ENCODE measurements at regions of chr5 and their contacts with region 1.

Region 1: GRCh38 chr5:140244525-140245025 is 58.3 kb downstream of the PFDN1 start:
- DNase-seq: peak; percentile 83
- CTCF ChIP-seq: peak; percentile 92

Region 2: DNA sequence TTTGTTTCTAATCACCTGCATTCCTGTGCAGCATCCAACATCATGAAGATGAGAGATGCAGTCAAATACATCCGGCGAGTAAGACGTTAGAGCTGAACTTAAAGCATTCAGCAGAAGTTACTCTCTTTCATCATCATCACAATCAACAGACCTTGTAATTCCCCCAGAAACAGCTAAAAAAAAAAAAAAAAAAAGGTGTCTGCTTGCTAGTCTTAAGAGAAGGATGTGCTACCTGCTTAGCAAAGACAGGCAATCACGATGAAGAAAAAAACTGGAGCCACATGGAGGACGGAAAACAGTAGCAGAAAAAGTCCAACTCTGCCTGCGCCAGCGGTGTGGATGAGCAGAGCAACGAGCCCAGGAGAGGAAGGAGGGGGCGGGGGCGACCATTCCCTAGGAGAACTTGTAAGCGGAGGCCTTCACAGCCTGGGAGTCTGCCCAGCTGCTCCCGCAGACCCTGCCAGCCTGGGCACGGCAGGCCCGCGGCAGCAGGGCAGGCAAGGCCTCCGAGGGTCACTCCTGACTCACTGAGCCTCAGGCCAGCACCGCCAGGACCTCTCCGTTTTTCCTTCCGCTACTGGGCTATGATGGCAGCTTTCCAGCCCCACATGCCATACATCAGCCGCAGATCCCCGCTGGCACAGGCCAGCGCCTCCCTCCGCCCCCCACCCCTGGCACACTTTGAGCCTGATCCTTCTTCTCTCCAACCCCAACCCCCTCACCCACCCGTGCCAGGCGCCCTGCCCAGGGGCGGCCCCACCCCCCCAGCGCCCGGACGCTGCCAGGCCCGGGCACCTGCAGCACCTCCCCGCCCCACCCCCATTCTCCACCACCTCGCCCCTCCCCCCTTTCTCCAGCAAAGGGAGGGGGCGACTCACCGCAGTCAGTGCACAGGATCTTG is 202.8 kb before region 1 on chr5:
- CTCF ChIA-PET with region 1: no interaction called
- POLR2A ChIA-PET with region 1: no interaction called
- DNase-seq: peak; percentile 31
- CTCF ChIP-seq: no peak

Region 3: DNA sequence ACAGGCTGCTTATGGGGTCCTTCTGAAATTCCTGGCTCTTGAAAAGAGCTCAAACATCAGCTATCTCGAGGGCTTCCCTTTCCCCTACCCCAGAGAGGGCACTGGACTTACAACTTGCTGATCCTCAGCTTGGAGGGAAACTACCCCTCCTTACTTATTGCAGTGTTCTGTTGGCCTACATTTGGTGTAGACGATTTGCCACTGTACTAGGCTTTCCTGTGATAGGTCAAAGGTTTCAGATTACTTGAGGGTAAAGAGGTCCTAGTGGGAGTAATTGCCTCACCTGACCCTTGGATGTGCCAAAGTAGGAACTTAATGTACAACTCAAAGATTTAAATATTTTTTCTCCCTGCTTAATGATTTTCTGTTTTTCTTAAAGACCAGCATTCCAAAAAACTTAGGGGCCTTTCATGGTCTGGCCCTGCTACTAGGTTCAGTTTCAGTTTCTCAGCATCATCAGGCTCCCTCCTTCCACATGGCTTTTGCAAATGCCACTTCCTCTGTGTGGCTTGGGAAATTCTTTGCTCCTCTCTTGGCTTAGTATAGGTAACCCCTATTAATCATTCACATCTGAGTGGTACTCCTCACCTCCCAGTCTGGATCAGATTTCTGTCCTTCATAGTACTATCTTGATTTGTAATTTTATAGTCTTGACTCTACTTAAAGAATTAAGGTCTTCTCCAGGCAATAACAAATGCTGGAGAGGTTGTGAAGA is 37.2 kb before region 1 on chr5:
- CTCF ChIA-PET with region 1: interaction called, 10 read pairs
- POLR2A ChIA-PET with region 1: no interaction called
- DNase-seq: no peak
- CTCF ChIP-seq: no peak

Region 4: GRCh38 chr5:140227048-140227447 is 17.5 kb before region 1 on chr5:
- CTCF ChIA-PET with region 1: interaction called, 33 read pairs
- POLR2A ChIA-PET with region 1: no interaction called
- DNase-seq: no peak
- CTCF ChIP-seq: no peak

Region 5: GRCh38 chr5:140284013-140284412 is 39.4 kb after region 1 on chr5:
- CTCF ChIA-PET with region 1: interaction called, 10 read pairs
- POLR2A ChIA-PET with region 1: no interaction called
- DNase-seq: no peak
- CTCF ChIP-seq: no peak

Region 6: DNA sequence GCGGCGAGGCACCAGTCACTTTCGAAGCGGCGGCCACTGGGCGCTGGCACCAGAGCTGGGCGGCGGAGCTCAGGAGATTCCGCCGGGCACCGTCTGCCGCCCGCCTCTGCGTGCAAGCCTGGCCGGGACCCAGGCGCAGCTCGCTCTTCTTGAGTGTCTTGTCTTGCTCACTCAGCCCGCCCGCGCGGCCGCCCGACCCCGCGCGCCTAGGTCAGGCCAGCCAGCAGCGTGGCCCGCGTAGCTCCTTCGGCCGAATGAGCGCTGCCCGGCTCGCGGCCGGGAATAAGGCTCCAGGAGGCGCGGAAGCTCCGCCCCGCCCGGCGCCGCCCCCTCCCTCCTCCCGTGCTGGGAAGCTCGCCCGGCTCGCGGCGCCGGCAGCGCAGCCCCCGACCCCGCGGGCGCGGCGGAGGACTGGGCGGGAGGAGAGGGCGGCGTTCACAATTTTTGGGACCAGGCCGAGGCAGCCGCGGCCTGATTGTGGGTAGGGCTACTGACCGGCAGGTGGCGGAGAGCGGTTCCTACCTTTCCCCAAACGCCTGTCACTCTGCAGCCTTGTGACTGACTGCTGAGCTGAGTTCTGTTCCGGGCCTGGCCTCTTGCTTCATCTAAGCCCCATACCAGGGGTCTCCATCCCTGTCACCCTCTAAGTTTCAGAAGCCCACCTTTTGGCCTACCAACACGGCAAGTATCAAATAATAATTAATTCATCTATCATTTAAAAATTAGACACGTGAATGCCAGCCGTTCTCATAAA is 102.0 kb after region 1 on chr5 and contains the start of gene HBEGF:
- CTCF ChIA-PET with region 1: interaction called, 462 read pairs
- POLR2A ChIA-PET with region 1: interaction called, 5 read pairs
- DNase-seq: peak; percentile 81
- CTCF ChIP-seq: peak; percentile 47

Region 7: GRCh38 chr5:140362860-140363630 is 118.5 kb after region 1 on chr5:
- CTCF ChIA-PET with region 1: interaction called, 48 read pairs
- POLR2A ChIA-PET with region 1: no interaction called
- DNase-seq: peak; percentile 92
- CTCF ChIP-seq: peak; percentile 99